T-cell (primary cell): ENCODE measurements at regions of chr13 and their contacts with region 1.

Region 1: DNA sequence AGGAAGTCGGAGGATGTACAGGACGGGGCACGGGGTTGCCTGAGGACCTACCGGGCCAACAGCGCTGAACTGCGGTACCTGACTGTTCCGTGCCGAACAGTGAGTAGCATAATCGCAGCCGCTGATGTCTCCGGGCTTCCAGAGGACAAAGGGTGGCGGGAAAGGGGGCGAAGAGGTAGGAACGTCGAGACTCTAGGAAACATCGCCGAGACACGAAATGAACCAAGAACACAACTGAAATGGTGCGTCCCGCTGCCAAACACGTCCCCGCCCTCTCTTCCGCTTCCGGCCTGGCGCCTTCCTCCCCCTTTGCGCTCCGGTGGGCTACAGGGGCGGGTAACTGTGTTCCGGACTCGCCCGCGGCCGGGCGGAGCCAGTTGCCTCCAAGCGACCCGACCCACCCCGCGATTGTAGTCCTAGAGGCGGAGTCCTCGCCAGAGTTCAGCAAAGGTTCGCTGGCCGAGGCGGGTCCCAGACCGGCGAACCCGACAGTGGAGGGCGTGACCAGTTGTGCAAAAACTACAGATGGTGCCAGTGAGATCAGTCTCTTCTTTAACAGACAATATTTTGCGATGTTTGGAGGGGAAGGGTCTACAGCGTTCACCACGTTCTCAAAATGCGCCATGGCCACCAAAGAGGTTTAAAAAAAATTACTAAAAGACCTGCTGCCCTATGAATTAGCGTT is at the start of gene MRPS31:
- DNase-seq: peak; percentile 84 to 95 (median 92)
- ATAC-seq: peak; percentile 95 to 99 (median 98)
- H3K4me3 ChIP-seq: peak within 1 kb of the TSS; percentile 98 to 99
- H3K4me3 Mint-ChIP-seq: peak within 1 kb of the TSS; percentile 90 to 99 (median 96)
- H3K27ac ChIP-seq: peak within 1 kb of the TSS; percentile 63
- H3K27ac Mint-ChIP-seq: peak within 1 kb of the TSS; percentile 93 to 98
- H3K4me1 ChIP-seq: peaks cover 16 to 24% of the 10 kb centered on the region in 2 experiments
- H3K4me1 Mint-ChIP-seq: peaks cover 27 to 39% (median 36%) of the 10 kb centered on the region in 3 donors
- H3K27me3 ChIP-seq: no peaks in the 10 kb centered on the region
- H3K27me3 Mint-ChIP-seq: no peaks in the 10 kb centered on the region
- total RNA-seq, gene MRPS31: 19.2 to 34.4 (median 28.5) TPM

Region 2: DNA sequence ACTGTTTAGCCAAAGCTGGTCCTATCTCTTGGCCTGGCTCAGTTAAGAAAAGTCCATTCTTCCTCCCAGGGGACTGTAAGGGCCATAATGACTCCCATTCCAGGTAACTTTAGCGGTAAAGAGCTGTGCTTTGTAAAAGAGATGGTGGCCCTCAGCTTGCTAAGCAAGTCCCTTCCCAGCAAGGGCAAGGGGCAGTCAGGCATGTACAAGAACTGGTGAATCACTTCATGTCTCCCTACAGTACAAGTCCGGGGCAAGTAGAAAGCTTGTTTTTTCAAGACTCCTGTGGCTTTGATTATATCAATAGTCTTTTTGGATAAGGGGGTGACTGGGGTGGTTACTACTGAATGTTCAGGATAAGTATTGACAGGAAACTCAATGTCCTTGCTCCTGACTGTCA is 107.2 kb after region 1 on chr13:
- CTCF ChIA-PET with region 1: no interaction called
- POLR2A ChIA-PET with region 1: interaction called in 1 of 2 experiments, 13 read pairs
- DNase-seq: no peak
- ATAC-seq: no peak
- H3K4me3 ChIP-seq: peak overlapping the region in 1 of 2 donors; percentile 3
- H3K4me3 Mint-ChIP-seq: no peak overlapping the region
- H3K27ac ChIP-seq: no peak overlapping the region
- H3K27ac Mint-ChIP-seq: no peak overlapping the region
- H3K4me1 ChIP-seq: peaks cover 0 to 9% of the 10 kb centered on the region in 2 experiments
- H3K4me1 Mint-ChIP-seq: peaks cover 15 to 21% (median 16%) of the 10 kb centered on the region in 3 donors
- H3K27me3 ChIP-seq: no peaks in the 10 kb centered on the region
- H3K27me3 Mint-ChIP-seq: no peaks in the 10 kb centered on the region

Region 3: DNA sequence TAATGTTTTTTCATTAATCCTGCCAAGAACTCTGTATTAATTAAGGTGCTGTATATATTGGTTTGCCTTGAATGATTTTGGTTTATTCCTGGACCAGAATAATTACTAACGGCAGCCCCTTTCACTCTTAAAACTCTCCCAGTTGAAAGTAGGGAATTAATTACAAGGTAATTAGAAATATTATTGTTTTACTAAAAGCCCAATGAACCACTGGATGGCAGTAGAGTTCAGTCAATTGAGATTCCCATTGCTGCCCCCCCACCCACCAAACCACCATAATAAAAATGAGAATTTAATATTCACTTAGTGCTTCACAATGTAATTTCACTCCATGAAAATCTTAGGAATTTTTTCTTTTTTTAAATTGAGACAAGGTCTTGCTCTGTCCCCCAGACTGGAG is 304.0 kb after region 1 on chr13:
- CTCF ChIA-PET with region 1: no interaction called
- POLR2A ChIA-PET with region 1: interaction called in 1 of 2 experiments, 11 read pairs
- DNase-seq: peak in 25 of 35 experiments; percentile 4 to 73 (median 25)
- ATAC-seq: peak in 1 of 4 experiments; percentile 44
- H3K4me3 ChIP-seq: no peak overlapping the region
- H3K4me3 Mint-ChIP-seq: no peak overlapping the region
- H3K27ac ChIP-seq: no peak overlapping the region
- H3K27ac Mint-ChIP-seq: no peak overlapping the region
- H3K4me1 ChIP-seq: no peaks in the 10 kb centered on the region
- H3K4me1 Mint-ChIP-seq: no peaks in the 10 kb centered on the region
- H3K27me3 ChIP-seq: no peaks in the 10 kb centered on the region
- H3K27me3 Mint-ChIP-seq: no peaks in the 10 kb centered on the region